Activated naive CD4-positive, alpha-beta T cell treated with anti-CD3 and anti-CD28 coated beads, Interleukin-2, amount 10 ng/mL, durations not matched to agents 7 days and 5 days (primary cell): ENCODE measurements at regions of chr5 and their contacts with region 1.

Region 1: DNA sequence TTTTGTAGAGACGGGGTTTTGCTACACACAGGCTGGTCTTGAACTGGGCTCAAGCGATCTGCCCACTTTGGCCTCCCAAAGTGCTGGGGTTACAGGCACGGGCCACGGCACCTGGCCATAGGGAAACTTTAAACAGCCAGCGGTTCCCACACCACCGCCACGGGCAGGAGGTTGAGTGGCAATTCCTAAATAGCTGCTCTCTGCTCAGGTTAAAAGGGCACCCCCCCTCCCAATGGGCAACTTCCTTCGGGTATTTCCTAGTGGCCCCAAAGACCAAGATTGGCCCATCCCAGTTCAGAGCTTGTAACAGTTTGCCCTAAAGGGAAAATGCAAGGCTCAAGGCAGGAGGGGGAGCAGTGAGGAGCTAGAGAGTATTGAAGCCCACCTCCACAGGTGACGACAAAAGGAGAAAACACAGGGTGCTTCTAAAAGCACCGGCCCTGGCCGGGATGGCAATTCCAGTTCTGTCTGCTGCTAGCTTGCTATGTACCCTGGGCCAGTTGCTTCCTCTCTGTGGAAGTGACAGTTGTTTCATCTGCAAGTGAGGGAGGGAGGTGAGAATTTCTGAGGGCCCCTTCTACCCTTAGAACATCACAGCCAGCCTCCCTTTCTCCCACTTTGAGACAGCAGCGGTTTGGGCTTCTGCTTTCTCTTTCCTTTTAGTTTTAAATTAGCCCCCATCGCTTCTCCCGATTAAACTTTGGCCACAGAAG is 17.1 kb upstream of the TNIP1 start:
- DNase-seq: peak; percentile 35
- H3K4me3 Mint-ChIP-seq: no peak overlapping the region
- H3K27ac Mint-ChIP-seq: peak overlapping the region; percentile 61
- H3K4me1 Mint-ChIP-seq: peaks cover 78% of the 10 kb centered on the region
- H3K27me3 Mint-ChIP-seq: no peaks in the 10 kb centered on the region

Region 2: GRCh38 chr5:151051066-151051930 is 46.6 kb before region 1 on chr5:
- CTCF ChIA-PET with region 1: interaction called, 14 read pairs
- DNase-seq: peak; percentile 82
- H3K4me3 Mint-ChIP-seq: no peak overlapping the region
- H3K27ac Mint-ChIP-seq: peak overlapping the region; percentile 17
- H3K4me1 Mint-ChIP-seq: peaks cover 7% of the 10 kb centered on the region
- H3K27me3 Mint-ChIP-seq: no peaks in the 10 kb centered on the region

Region 3: DNA sequence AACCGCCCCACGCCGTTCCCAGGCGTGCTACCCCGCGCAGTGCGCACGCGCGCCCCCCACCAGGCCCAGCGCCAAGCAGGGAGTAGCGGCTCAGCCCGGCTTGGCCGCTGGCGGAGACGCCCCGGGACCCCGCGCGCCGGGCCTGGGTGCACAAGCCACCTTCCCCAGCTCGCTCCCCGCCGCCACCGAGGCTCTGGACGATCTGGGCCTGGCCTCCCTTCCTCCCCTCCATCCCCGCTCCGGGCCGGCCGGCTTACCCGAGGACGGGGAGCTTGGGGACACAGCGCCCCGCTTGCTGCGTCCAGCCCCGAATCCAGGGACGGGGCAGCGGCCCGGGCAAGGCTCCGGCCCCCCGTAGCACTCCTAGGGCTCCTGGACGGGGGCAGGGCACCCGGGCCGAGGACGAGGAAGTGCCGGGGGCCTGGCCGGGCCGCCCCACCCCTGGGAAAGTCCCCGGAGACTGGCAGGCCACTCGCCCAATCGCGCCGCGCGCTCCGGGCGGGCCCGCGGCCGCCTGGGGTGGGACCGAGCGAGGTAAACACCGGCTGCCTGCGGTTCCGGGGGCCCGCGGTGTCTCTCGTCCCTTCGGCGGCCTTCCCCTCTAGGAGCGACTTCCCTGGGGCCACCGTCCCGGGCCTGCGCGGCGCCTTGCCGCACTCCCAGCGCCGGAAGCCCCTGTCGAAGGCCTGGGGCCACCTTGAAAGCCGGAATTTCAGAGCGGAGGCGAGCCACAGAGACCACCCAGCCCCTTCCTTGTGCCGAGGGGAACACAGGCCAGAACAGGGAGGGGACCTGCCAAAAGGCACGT is 17.1 kb before region 1 on chr5 and contains the start of gene TNIP1:
- CTCF ChIA-PET with region 1: interaction called, 11 read pairs
- DNase-seq: peak; percentile 94
- H3K4me3 Mint-ChIP-seq: peak within 1 kb of the TSS; percentile 79
- H3K27ac Mint-ChIP-seq: peak within 1 kb of the TSS; percentile 93
- H3K4me1 Mint-ChIP-seq: peaks cover 80% of the 10 kb centered on the region
- H3K27me3 Mint-ChIP-seq: no peaks in the 10 kb centered on the region

Region 4: GRCh38 chr5:151577559-151577958 is 479.6 kb after region 1 on chr5:
- CTCF ChIA-PET with region 1: no interaction called
- DNase-seq: no peak
- H3K4me3 Mint-ChIP-seq: no peak overlapping the region
- H3K27ac Mint-ChIP-seq: no peak overlapping the region
- H3K4me1 Mint-ChIP-seq: peaks cover 11% of the 10 kb centered on the region
- H3K27me3 Mint-ChIP-seq: peaks cover 14% of the 10 kb centered on the region